Calu3 (cell line): ENCODE measurements at regions of chr14 and their contacts with region 1.

Region 1: DNA sequence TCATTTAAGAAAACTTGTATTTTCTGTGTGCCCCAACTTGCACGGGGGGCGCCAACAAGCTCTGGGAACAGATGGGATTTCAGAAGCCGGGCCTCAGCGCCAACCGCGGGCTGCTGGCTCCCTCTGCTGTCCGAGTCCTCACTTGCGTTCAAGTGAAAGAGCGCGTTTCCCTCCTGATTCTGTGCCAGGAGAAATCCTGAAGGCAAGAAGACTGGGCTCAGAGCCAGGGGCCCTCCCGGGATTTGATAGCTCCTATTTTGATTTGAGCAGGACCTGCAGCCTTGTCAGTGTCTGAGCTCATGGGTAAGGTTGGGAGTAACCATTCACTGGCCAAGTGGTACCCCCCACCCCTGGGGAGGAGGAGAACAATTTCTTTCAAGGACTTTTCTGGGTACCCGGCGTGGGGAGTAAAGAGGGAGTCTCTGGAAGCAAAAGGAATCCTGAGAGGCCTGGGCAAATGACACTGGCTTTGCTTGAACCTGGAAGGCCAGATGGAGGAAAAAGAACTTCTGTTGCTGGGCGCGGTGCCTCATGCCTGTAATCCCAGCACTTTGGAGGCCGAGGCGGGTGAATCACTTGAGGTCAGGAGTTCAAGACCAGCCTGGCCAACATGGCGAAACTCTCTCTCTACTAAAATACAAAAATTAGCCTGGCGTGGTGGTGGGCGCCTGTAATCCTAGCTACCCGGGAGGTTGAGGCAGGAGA is 179.0 kb upstream of the RGS6 start:
- DNase-seq: peak; percentile 84
- H3K4me3 Mint-ChIP-seq: peak overlapping the region; percentile 26
- H3K27ac Mint-ChIP-seq: no peak overlapping the region
- H3K4me1 Mint-ChIP-seq: peaks cover 9% of the 10 kb centered on the region
- H3K27me3 Mint-ChIP-seq: no peaks in the 10 kb centered on the region
- CTCF ChIP-seq: peak; percentile 88

Region 2: DNA sequence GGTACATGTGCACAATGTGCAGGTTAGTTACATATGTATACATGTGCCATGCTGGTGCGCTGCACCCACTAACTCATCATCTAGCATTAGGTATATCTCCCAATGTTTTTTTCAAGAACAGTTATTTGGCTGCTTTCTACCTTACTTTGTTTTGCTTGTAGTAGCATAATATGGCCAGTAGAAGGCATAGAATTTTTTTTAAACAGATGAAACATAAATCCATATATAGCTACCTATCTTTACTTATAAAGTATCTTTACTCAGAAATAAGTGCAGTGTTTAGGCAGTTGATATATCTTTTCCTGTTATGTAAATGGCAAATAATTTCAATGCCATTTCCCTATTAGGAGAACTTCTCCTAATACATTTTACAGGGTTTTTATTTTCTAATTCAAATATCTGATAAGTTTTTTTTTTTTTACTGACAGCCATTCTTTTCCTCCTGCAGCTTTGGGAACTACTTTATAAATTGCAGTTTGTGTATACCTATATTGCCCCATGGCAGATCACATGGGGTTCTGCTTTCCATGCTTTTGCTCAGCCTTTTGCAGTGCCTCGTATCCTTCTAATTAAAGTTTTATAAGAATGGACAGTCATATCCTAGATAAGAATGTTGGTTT is 703.0 kb before region 1 on chr14:
- CTCF ChIA-PET with region 1: interaction called, 3 read pairs
- intact Hi-C with region 1: loop called (anchors 1 kb)
- DNase-seq: no peak
- H3K4me3 Mint-ChIP-seq: no peak overlapping the region
- H3K27ac Mint-ChIP-seq: no peak overlapping the region
- H3K4me1 Mint-ChIP-seq: no peaks in the 10 kb centered on the region
- H3K27me3 Mint-ChIP-seq: no peaks in the 10 kb centered on the region
- CTCF ChIP-seq: no peak

Region 3: GRCh38 chr14:71103662-71104484 is 649.4 kb before region 1 on chr14:
- CTCF ChIA-PET with region 1: no interaction called
- intact Hi-C with region 1: loop called (anchors 1 kb)
- DNase-seq: peak; percentile 46
- H3K4me3 Mint-ChIP-seq: no peak overlapping the region
- H3K27ac Mint-ChIP-seq: no peak overlapping the region
- H3K4me1 Mint-ChIP-seq: peaks cover 12% of the 10 kb centered on the region
- H3K27me3 Mint-ChIP-seq: no peaks in the 10 kb centered on the region
- CTCF ChIP-seq: peak; percentile 42

Region 4: GRCh38 chr14:71138448-71139293 is 614.6 kb before region 1 on chr14:
- CTCF ChIA-PET with region 1: interaction called, 4 read pairs
- intact Hi-C with region 1: loop called (anchors 1 kb)
- DNase-seq: peak; percentile 67
- H3K4me3 Mint-ChIP-seq: no peak overlapping the region
- H3K27ac Mint-ChIP-seq: no peak overlapping the region
- H3K4me1 Mint-ChIP-seq: peaks cover 8% of the 10 kb centered on the region
- H3K27me3 Mint-ChIP-seq: no peaks in the 10 kb centered on the region
- CTCF ChIP-seq: peak; percentile 89

Region 5: GRCh38 chr14:71452539-71452938 is 300.7 kb before region 1 on chr14:
- CTCF ChIA-PET with region 1: no interaction called
- intact Hi-C with region 1: no loop called
- DNase-seq: no peak
- H3K4me3 Mint-ChIP-seq: no peak overlapping the region
- H3K27ac Mint-ChIP-seq: no peak overlapping the region
- H3K4me1 Mint-ChIP-seq: peaks cover 20% of the 10 kb centered on the region
- H3K27me3 Mint-ChIP-seq: no peaks in the 10 kb centered on the region
- CTCF ChIP-seq: no peak

Region 6: DNA sequence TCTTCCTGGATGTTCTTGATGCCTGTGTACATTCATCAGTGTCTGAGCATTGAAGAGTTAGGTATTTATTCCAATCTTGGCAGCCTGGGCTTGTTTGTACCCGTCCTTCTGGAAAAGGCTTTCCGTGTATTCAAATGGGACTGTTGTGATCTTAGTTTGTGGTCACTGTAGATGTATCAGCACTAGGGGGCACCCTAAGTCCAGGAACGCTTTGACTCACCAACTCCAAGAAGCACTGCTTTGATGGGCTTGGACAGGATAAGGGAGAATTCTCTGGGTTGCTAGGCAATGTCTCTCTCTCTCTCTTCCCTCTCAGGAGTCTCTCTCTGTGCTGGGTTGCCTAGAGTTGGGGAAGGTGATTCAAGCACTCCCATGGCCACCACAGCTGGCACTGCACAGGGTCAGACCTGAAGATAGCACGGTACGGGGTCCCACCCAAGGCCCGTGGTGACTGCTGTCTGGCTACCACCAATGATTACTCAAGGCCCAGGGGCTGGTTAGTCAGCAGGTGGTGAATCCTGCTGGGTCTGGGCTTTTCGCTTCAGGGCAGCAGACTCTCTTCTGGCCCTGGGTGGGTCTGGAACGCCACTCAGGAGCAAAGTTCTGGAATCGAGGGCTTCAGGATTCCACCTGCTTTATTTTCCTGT is 32.2 kb before region 1 on chr14:
- CTCF ChIA-PET with region 1: interaction called, 7 read pairs
- intact Hi-C with region 1: loop called (anchors 1 kb)
- DNase-seq: peak; percentile 64
- H3K4me3 Mint-ChIP-seq: no peak overlapping the region
- H3K27ac Mint-ChIP-seq: no peak overlapping the region
- H3K4me1 Mint-ChIP-seq: no peaks in the 10 kb centered on the region
- H3K27me3 Mint-ChIP-seq: no peaks in the 10 kb centered on the region
- CTCF ChIP-seq: peak; percentile 36

Region 7: GRCh38 chr14:71855399-71856036 is 102.2 kb after region 1 on chr14:
- CTCF ChIA-PET with region 1: interaction called, 6 read pairs
- intact Hi-C with region 1: loop called (anchors 10 kb)
- DNase-seq: peak; percentile 86
- H3K4me3 Mint-ChIP-seq: no peak overlapping the region
- H3K27ac Mint-ChIP-seq: no peak overlapping the region
- H3K4me1 Mint-ChIP-seq: no peaks in the 10 kb centered on the region
- H3K27me3 Mint-ChIP-seq: peaks cover 30% of the 10 kb centered on the region
- CTCF ChIP-seq: peak; percentile 64

Region 8: DNA sequence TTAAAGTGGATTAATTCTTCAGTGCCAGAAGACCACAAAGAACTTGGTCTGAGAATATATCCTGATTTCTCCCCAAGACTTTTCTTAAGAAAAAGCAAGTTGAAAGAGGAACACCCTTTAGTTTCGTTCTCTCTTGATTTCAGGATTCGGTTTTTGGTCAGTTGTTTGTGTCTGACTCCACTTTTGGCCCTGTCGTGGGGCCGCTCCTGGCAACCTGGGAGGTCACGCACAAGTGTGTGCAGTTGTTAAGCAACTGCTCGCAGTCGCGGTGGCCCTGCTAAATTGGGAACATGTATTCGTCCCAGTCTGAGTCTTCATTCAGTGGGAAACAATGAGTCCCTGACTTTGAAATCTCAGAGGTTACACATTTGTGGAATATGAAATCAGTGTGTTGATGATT is 247.6 kb after region 1 on chr14:
- CTCF ChIA-PET with region 1: no interaction called
- intact Hi-C with region 1: no loop called
- DNase-seq: no peak
- H3K4me3 Mint-ChIP-seq: no peak overlapping the region
- H3K27ac Mint-ChIP-seq: no peak overlapping the region
- H3K4me1 Mint-ChIP-seq: no peaks in the 10 kb centered on the region
- H3K27me3 Mint-ChIP-seq: no peaks in the 10 kb centered on the region
- CTCF ChIP-seq: no peak